CD4-positive, alpha-beta T cell (primary cell): ENCODE measurements at regions of chr5 and their contacts with region 1.

Region 1: GRCh38 chr5:119070828-119071572 is at the start of gene DMXL1:
- DNase-seq: peak; percentile 96 to 99 (median 98)
- ATAC-seq: peak; percentile 82
- H3K4me3 ChIP-seq: peak within 1 kb of the TSS; percentile 81
- H3K4me3 Mint-ChIP-seq: peak within 1 kb of the TSS; percentile 100
- H3K27ac ChIP-seq: peak within 1 kb of the TSS; percentile 90 to 94
- H3K27ac Mint-ChIP-seq: peak within 1 kb of the TSS; percentile 98
- H3K4me1 ChIP-seq: peaks cover 19% of the 10 kb centered on the region
- H3K4me1 Mint-ChIP-seq: peaks cover 46% of the 10 kb centered on the region
- H3K27me3 ChIP-seq: no peaks in the 10 kb centered on the region
- H3K27me3 Mint-ChIP-seq: no peaks in the 10 kb centered on the region
- CTCF ChIP-seq: no peak
- total RNA-seq, gene DMXL1: 28.4 to 29.1 TPM

Region 2: DNA sequence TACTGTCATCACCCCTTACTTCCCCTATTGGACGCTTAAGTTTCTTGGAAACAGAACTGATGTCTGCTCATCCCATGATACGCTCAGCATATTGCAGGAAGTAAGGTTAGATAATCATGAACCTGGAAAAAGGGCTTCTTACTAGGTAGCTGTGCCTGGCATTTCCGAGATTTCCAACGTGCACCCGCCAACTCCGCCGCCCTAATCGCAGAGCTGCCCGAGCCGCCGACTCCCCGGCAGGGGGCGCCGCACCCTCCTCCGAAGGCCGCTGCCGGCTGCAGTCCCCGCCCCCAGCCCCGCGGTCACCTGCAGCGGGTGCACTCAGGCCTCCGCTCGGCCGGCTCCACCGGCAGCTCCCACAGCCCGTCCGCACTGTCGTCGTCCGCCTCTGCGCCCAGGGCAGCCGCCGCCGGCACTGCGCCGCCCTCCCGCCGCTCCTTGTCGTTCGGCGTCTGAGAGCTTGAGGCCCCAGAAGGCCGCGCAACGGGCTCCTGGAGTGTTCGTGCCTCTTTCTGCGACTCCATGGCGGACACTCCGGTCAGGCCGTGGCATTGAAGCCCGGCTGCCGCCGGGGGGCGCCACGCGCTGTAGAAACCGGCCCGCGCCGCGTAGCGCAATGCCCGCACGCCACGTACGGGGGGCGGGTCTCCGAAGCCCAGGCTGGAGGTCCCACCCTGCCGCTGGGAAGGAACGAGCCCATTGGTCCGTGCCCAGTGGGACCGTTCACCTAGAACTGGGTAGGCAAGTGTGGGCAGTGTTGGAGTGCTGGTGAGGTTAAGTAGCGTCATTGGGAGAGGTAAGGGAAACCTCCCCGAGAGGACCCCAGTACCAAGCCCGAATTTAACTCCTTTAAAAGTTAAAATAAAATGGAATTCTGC is 82.8 kb before region 1 on chr5 and contains the start of gene DTWD2:
- CTCF ChIA-PET with region 1: interaction called, 18 read pairs
- POLR2A ChIA-PET with region 1: interaction called, 23 read pairs
- intact Hi-C with region 1: loop called (anchors 2 to 5 kb)
- DNase-seq: peak; percentile 83 to 96 (median 89)
- ATAC-seq: peak; percentile 90
- H3K4me3 ChIP-seq: peak within 1 kb of the TSS; percentile 52
- H3K4me3 Mint-ChIP-seq: peak within 1 kb of the TSS; percentile 87
- H3K27ac ChIP-seq: peak within 1 kb of the TSS; percentile 54 to 70
- H3K27ac Mint-ChIP-seq: peak within 1 kb of the TSS; percentile 73
- H3K4me1 ChIP-seq: peaks cover 10% of the 10 kb centered on the region
- H3K4me1 Mint-ChIP-seq: peaks cover 31% of the 10 kb centered on the region
- H3K27me3 ChIP-seq: no peaks in the 10 kb centered on the region
- H3K27me3 Mint-ChIP-seq: no peaks in the 10 kb centered on the region
- CTCF ChIP-seq: peak; percentile 96
- total RNA-seq, gene DTWD2: 2.1 to 2.3 TPM

Region 3: GRCh38 chr5:119153629-119154028 is 82.6 kb after region 1 on chr5:
- CTCF ChIA-PET with region 1: no interaction called
- POLR2A ChIA-PET with region 1: no interaction called
- intact Hi-C with region 1: no loop called
- DNase-seq: no peak
- ATAC-seq: no peak
- H3K4me3 ChIP-seq: no peak overlapping the region
- H3K4me3 Mint-ChIP-seq: no peak overlapping the region
- H3K27ac ChIP-seq: no peak overlapping the region
- H3K27ac Mint-ChIP-seq: no peak overlapping the region
- H3K4me1 ChIP-seq: no peaks in the 10 kb centered on the region
- H3K4me1 Mint-ChIP-seq: no peaks in the 10 kb centered on the region
- H3K27me3 ChIP-seq: no peaks in the 10 kb centered on the region
- H3K27me3 Mint-ChIP-seq: no peaks in the 10 kb centered on the region
- CTCF ChIP-seq: no peak

Region 4: GRCh38 chr5:119238265-119239118 is 167.5 kb after region 1 on chr5:
- CTCF ChIA-PET with region 1: interaction called, 3 read pairs
- POLR2A ChIA-PET with region 1: interaction called, 14 read pairs
- intact Hi-C with region 1: no loop called
- DNase-seq: peak in 3 of 14 experiments; percentile 6 to 40 (median 38)
- ATAC-seq: peak; percentile 94
- H3K4me3 ChIP-seq: no peak overlapping the region
- H3K4me3 Mint-ChIP-seq: peak overlapping the region; percentile 70
- H3K27ac ChIP-seq: peak overlapping the region in 1 of 2 donors; percentile 10
- H3K27ac Mint-ChIP-seq: peak overlapping the region; percentile 97
- H3K4me1 ChIP-seq: no peaks in the 10 kb centered on the region
- H3K4me1 Mint-ChIP-seq: peaks cover 42% of the 10 kb centered on the region
- H3K27me3 ChIP-seq: no peaks in the 10 kb centered on the region
- H3K27me3 Mint-ChIP-seq: no peaks in the 10 kb centered on the region
- CTCF ChIP-seq: no peak

Region 5: GRCh38 chr5:119274767-119275130 is 203.7 kb after region 1 on chr5:
- CTCF ChIA-PET with region 1: interaction called, 4 read pairs
- POLR2A ChIA-PET with region 1: interaction called, 10 read pairs
- intact Hi-C with region 1: loop called (anchors 5 kb)
- DNase-seq: peak in 4 of 14 experiments; percentile 44 to 81 (median 70)
- ATAC-seq: peak; percentile 38
- H3K4me3 ChIP-seq: peak overlapping the region; percentile 69
- H3K4me3 Mint-ChIP-seq: peak overlapping the region; percentile 99
- H3K27ac ChIP-seq: peak overlapping the region; percentile 67 to 84
- H3K27ac Mint-ChIP-seq: peak overlapping the region; percentile 97
- H3K4me1 ChIP-seq: peaks cover 84% of the 10 kb centered on the region
- H3K4me1 Mint-ChIP-seq: peaks cover 96% of the 10 kb centered on the region
- H3K27me3 ChIP-seq: no peaks in the 10 kb centered on the region
- H3K27me3 Mint-ChIP-seq: peaks cover 6% of the 10 kb centered on the region
- CTCF ChIP-seq: no peak

Region 6: DNA sequence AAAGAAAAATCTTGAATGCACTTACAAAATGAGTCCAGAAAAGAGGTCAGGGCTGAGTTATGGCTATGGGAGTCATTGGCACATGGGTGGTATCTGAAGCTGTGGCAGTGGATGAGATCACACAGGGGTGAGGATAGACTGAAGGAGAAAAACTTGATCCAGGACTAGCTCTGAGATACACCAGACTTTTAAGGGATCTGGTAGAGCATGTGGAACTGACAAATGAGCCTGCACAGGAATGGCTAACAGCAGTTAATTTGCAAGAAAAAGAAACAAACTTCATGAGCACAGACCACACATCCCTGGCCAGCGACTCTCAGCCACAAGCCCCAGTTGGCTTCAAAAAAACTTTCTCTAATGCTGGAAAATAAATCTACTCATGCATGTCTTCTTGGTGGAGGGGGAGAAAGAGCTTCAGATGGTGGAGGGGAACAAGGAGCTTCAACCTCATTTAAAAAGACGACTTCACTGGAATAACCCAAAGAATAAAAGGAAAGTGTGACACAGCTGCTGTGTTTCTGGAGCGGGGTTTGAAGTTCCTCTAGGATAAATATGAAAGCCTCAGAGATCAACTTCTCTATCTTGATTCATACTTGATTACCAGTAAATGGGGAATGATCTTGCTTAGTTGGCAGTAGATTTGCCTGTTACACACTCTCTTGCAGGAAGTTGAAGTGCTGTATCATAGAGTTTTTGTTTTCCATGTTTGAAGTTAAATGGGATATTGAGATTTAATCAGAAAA is 318.5 kb after region 1 on chr5:
- CTCF ChIA-PET with region 1: interaction called, 6 read pairs
- POLR2A ChIA-PET with region 1: interaction called, 4 read pairs
- intact Hi-C with region 1: loop called in 1 of 2 experiments (anchors 5 kb)
- DNase-seq: no peak
- ATAC-seq: no peak
- H3K4me3 ChIP-seq: no peak overlapping the region
- H3K4me3 Mint-ChIP-seq: no peak overlapping the region
- H3K27ac ChIP-seq: peak overlapping the region in 1 of 2 donors; percentile 30
- H3K27ac Mint-ChIP-seq: peak overlapping the region; percentile 80
- H3K4me1 ChIP-seq: peaks cover 29% of the 10 kb centered on the region
- H3K4me1 Mint-ChIP-seq: peaks cover 85% of the 10 kb centered on the region
- H3K27me3 ChIP-seq: no peaks in the 10 kb centered on the region
- H3K27me3 Mint-ChIP-seq: no peaks in the 10 kb centered on the region
- CTCF ChIP-seq: no peak

Region 7: GRCh38 chr5:119411935-119412602 is 341.1 kb after region 1 on chr5:
- CTCF ChIA-PET with region 1: interaction called, 4 read pairs
- POLR2A ChIA-PET with region 1: interaction called, 10 read pairs
- intact Hi-C with region 1: loop called (anchors 2 to 5 kb)
- DNase-seq: peak in 13 of 14 experiments; percentile 11 to 87 (median 43)
- ATAC-seq: peak; percentile 94
- H3K4me3 ChIP-seq: peak overlapping the region; percentile 62
- H3K4me3 Mint-ChIP-seq: peak overlapping the region; percentile 85
- H3K27ac ChIP-seq: no peak overlapping the region
- H3K27ac Mint-ChIP-seq: peak overlapping the region; percentile 31
- H3K4me1 ChIP-seq: peaks cover 8% of the 10 kb centered on the region
- H3K4me1 Mint-ChIP-seq: peaks cover 20% of the 10 kb centered on the region
- H3K27me3 ChIP-seq: no peaks in the 10 kb centered on the region
- H3K27me3 Mint-ChIP-seq: no peaks in the 10 kb centered on the region
- CTCF ChIP-seq: peak; percentile 92

Region 8: GRCh38 chr5:119452373-119453039 is 381.5 kb after region 1 on chr5 and contains the start of gene HSD17B4:
- CTCF ChIA-PET with region 1: no interaction called
- POLR2A ChIA-PET with region 1: interaction called, 7 read pairs
- intact Hi-C with region 1: loop called (anchors 5 kb)
- DNase-seq: peak; percentile 55 to 90 (median 72)
- ATAC-seq: peak; percentile 93
- H3K4me3 ChIP-seq: peak within 1 kb of the TSS; percentile 82
- H3K4me3 Mint-ChIP-seq: peak within 1 kb of the TSS; percentile 89
- H3K27ac ChIP-seq: peak within 1 kb of the TSS; percentile 66 to 80
- H3K27ac Mint-ChIP-seq: peak within 1 kb of the TSS; percentile 73
- H3K4me1 ChIP-seq: peaks cover 13% of the 10 kb centered on the region
- H3K4me1 Mint-ChIP-seq: peaks cover 24% of the 10 kb centered on the region
- H3K27me3 ChIP-seq: no peaks in the 10 kb centered on the region
- H3K27me3 Mint-ChIP-seq: no peaks in the 10 kb centered on the region
- CTCF ChIP-seq: no peak
- total RNA-seq, gene HSD17B4: 11.9 to 13.1 TPM

Region 9: DNA sequence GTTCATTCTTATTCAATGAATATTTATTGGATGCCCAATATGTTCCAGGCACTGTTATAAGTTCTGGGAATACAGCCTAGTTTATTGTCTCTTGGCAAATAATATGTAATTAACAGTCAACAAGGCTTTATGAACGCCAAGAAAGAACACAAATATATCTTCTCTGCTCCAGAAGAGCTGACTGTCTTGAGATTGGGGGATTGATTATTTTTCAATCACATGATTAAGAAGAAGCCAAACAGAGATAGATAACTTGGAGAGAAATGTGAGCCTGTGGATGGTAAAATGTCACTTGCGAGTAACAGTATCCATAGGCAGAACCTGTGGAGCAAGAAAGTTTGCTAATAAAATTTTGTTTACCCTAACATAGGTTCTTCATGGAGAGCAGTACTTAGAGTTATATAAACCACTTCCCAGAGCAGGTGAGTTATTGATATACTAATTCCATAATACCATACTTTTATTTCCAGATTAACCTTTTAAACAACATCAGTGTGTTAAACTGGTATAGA is 430.7 kb after region 1 on chr5:
- CTCF ChIA-PET with region 1: no interaction called
- POLR2A ChIA-PET with region 1: no interaction called
- intact Hi-C with region 1: no loop called
- DNase-seq: no peak
- ATAC-seq: no peak
- H3K4me3 ChIP-seq: no peak overlapping the region
- H3K4me3 Mint-ChIP-seq: no peak overlapping the region
- H3K27ac ChIP-seq: no peak overlapping the region
- H3K27ac Mint-ChIP-seq: no peak overlapping the region
- H3K4me1 ChIP-seq: no peaks in the 10 kb centered on the region
- H3K4me1 Mint-ChIP-seq: no peaks in the 10 kb centered on the region
- H3K27me3 ChIP-seq: no peaks in the 10 kb centered on the region
- H3K27me3 Mint-ChIP-seq: no peaks in the 10 kb centered on the region
- CTCF ChIP-seq: no peak